Endothelial cell of umbilical vein (primary cell): ENCODE measurements at regions of chr7 and their contacts with region 1.

Region 1: GRCh38 chr7:155463114-155463811 is 5.3 kb downstream of the EN2 start:
- DNase-seq: no peak
- H3K4me3 ChIP-seq: no peak overlapping the region
- H3K27ac ChIP-seq: no peak overlapping the region
- H3K4me1 ChIP-seq: no peaks in the 10 kb centered on the region
- H3K27me3 ChIP-seq: peaks cover 85 to 100% of the 10 kb centered on the region in 2 experiments
- CTCF ChIP-seq: no peak
- POLR2A ChIP-seq: no peak

Region 2: DNA sequence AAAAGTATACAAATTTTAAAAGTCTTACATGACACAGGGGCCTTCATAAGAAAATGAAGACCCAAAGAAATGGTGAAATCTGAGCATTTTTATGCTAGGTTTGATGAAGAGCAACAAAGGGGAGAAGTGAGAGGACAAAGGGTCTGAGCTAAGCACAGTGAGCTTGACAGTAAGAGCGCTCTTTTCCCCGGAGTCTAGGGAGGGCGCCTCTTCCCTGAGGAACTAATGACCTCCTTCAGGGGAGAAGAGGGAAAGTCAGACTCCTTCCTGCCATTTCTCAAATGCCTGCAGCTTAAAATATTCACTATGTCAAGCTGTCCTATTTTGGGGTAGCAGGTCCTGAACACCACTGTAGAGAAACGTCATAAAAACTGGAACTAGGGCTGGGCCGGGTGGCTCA is 442.3 kb before region 1 on chr7:
- CTCF ChIA-PET with region 1: no interaction called
- POLR2A ChIA-PET with region 1: no interaction called
- dilution Hi-C with region 1: no loop called
- intact Hi-C with region 1: no loop called
- DNase-seq: no peak
- H3K4me3 ChIP-seq: no peak overlapping the region
- H3K27ac ChIP-seq: no peak overlapping the region
- H3K4me1 ChIP-seq: no peaks in the 10 kb centered on the region
- H3K27me3 ChIP-seq: no peaks in the 10 kb centered on the region
- CTCF ChIP-seq: no peak
- POLR2A ChIP-seq: no peak

Region 3: GRCh38 chr7:155509725-155510551 is 46.7 kb after region 1 on chr7:
- CTCF ChIA-PET with region 1: no interaction called
- POLR2A ChIA-PET with region 1: no interaction called
- dilution Hi-C with region 1: no loop called
- intact Hi-C with region 1: loop called (anchors 5 kb)
- DNase-seq: no peak
- H3K4me3 ChIP-seq: no peak overlapping the region
- H3K27ac ChIP-seq: no peak overlapping the region
- H3K4me1 ChIP-seq: no peaks in the 10 kb centered on the region
- H3K27me3 ChIP-seq: peaks cover 45 to 81% of the 10 kb centered on the region in 2 experiments
- CTCF ChIP-seq: no peak
- POLR2A ChIP-seq: no peak

Region 4: GRCh38 chr7:155676052-155676451 is 212.8 kb after region 1 on chr7:
- CTCF ChIA-PET with region 1: no interaction called
- POLR2A ChIA-PET with region 1: no interaction called
- dilution Hi-C with region 1: no loop called
- intact Hi-C with region 1: no loop called
- DNase-seq: no peak
- H3K4me3 ChIP-seq: no peak overlapping the region
- H3K27ac ChIP-seq: no peak overlapping the region
- H3K4me1 ChIP-seq: peaks cover 4% of the 10 kb centered on the region
- H3K27me3 ChIP-seq: no peaks in the 10 kb centered on the region
- CTCF ChIP-seq: no peak
- POLR2A ChIP-seq: no peak